ENCODE measurements at regions of chr7 and their contacts with region 1.

Region 1: DNA sequence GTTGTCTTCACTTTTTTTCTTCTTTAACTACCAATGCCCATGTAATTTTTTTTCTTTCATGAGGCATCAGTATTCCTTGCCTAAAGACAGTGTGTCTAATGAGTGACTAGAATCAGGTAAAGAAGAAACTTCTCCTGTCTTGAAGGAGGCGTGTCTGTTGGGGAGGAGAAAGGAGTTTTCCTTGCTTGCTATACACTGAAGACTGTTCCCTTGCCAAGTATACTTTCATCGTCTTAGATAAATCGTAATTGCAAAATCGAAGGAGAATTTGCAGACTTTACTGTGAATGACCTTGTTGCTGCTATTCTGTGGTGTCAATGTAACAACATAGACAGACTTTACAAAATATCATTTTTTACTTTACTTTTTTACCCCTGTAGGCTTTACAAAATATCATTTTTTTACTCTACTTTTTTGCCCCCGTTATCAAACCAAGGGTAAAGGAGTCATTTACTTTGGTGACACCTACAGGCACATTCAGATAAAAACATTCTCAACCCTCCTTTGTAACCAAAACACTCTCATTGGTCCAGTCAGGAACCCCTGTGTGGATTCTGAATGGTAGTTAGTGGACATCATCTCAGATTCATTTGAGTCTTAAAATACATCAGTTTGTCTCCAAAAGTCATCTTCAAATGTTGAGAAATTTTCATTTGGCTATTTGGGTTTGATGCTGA is 232.4 kb downstream of the AHR start:
- DNase-seq: peak; percentile 36
- ATAC-seq: no peak
- H3K4me3 ChIP-seq: no peak overlapping the region
- H3K27ac ChIP-seq: no peak overlapping the region
- H3K4me1 ChIP-seq: peaks cover 36% of the 10 kb centered on the region
- H3K27me3 ChIP-seq: no peaks in the 10 kb centered on the region
- CTCF ChIP-seq: peak; percentile 70

Region 2: DNA sequence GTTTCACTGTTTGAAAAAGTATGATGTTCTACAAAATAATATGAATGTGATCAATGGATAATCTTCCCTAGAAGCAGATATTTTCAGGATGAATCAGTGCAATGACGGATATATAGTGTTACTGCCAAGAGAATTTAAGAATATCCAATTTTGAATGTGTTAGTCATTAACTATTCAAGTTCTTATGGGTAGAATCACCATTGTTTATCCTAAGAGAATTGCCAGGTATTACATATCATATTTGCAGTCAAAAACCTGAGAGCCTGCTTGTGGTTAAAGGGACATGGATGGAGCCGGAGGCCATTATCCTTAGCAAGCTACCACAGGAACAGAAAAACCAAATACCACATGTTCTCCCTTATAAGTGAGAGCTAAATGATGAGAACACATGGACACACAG is 205.5 kb before region 1 on chr7:
- CTCF ChIA-PET with region 1: no interaction called
- POLR2A ChIA-PET with region 1: no interaction called
- intact Hi-C with region 1: loop called (anchors 5 kb)
- DNase-seq: peak; percentile 89
- ATAC-seq: peak; percentile 76
- H3K4me3 ChIP-seq: no peak overlapping the region
- H3K27ac ChIP-seq: peak overlapping the region; percentile 67
- H3K4me1 ChIP-seq: peaks cover 23% of the 10 kb centered on the region
- H3K27me3 ChIP-seq: no peaks in the 10 kb centered on the region
- CTCF ChIP-seq: no peak

Region 3: GRCh38 chr7:17474724-17475344 is 56.0 kb before region 1 on chr7:
- CTCF ChIA-PET with region 1: no interaction called
- POLR2A ChIA-PET with region 1: no interaction called
- intact Hi-C with region 1: no loop called
- DNase-seq: peak; percentile 24
- ATAC-seq: peak; percentile 35; the same call in 1 of the 2 replicates
- H3K4me3 ChIP-seq: no peak overlapping the region
- H3K27ac ChIP-seq: no peak overlapping the region
- H3K4me1 ChIP-seq: no peaks in the 10 kb centered on the region
- H3K27me3 ChIP-seq: no peaks in the 10 kb centered on the region
- CTCF ChIP-seq: peak; percentile 48

Region 4: DNA sequence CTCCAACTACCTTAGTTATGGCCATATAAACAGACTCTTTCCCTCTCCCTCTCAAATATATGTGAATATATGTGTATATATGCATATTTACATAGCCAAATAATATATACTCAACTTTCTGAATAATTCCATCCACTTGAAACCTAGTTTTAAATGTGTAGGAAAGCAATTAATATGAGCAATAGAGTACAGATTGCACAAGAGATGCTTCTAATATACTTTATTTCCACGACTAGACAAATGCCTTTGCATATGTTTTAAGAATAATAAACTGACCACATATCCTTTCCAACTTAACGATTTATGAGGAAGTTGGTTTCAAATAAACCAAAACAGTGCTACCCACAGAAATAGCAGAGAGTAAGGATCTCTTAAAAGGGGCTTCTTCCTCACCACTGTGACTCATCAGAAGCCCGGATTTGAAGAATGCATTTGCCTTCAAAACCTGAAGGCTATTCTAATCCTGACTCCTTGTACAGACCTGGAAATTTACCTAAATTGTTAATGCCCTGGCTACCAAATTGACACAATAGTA is 33.9 kb after region 1 on chr7:
- CTCF ChIA-PET with region 1: no interaction called
- POLR2A ChIA-PET with region 1: interaction called, 5 read pairs
- intact Hi-C with region 1: loop called (anchors 1 kb)
- DNase-seq: peak; percentile 64
- ATAC-seq: peak; percentile 73
- H3K4me3 ChIP-seq: no peak overlapping the region
- H3K27ac ChIP-seq: peak overlapping the region; percentile 8
- H3K4me1 ChIP-seq: peaks cover 28% of the 10 kb centered on the region
- H3K27me3 ChIP-seq: no peaks in the 10 kb centered on the region
- CTCF ChIP-seq: no peak

Measured in PC-3 (cell line).